H1 (cell line): ENCODE measurements at regions of chr11 and their contacts with region 1.

Region 1: DNA sequence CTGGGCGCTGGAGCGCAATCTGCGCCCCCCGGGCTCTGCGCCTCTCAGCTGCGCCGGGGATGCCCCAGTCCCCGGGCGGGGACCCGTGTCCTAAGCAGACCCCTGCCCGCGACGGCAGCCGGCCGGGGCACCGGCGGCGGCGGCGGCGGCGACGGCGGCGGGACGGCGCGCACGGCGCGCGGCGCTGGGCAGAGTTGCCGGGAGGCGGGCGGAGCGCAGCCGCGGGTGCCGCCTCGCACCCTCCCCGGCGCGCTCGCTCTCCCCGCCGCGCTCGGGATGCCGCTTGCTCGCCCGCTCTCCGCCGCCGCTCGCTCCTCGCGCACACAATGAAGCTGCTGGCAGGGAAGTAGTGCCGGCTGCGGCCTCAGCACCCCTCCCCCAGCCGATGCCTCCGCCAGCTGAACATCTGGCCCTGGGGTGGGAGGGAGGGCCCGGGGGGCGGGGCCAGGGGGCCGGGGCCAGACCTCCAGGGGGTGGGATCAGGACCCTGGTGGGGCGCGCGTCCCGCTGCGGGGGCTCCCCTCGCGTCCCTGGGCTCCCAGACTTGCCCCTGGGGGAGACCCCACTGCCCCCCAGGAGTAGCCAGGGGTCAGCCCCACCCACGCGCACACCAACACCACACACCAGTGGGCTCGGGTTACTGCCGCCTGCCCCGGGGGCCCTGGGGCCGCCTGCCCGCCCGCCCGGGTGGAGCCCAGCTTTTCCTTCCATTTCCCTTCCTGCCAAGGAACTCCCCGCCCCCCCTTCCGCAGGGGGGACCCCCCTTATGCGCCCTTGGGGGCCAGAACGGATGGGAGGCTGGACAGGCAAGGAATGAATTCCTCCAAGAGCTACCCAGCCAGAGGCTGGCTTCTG is at the start of gene RCOR2:
- DNase-seq: peak in 1 of 2 experiments; percentile 88
- H3K4me3 ChIP-seq: peak within 1 kb of the TSS; percentile 67 to 95 (median 89)
- H3K27ac ChIP-seq: peak within 1 kb of the TSS; percentile 95
- H3K4me1 ChIP-seq: peaks cover 2 to 37% (median 31%) of the 10 kb centered on the region in 4 experiments
- H3K27me3 ChIP-seq: no peaks in the 10 kb centered on the region
- CTCF ChIP-seq: no peak
- EP300 ChIP-seq: no peak; a peak in 1 of 3 replicates
- POLR2A ChIP-seq: peak in 1 of 2 experiments; percentile 41; a peak in 1 of 3 replicates
- RAD21 ChIP-seq: no peak
- total RNA-seq, gene RCOR2: 78.0 and 80.1 TPM in 2 replicates

Region 2: GRCh38 chr11:63768237-63769043 is 148.6 kb before region 1 on chr11 and contains the start of gene ZFTA:
- CTCF ChIA-PET with region 1: interaction called, 8 read pairs
- POLR2A ChIA-PET with region 1: interaction called, 73 read pairs
- DNase-seq: peak in 1 of 2 experiments; percentile 90
- H3K4me3 ChIP-seq: peak within 1 kb of the TSS; percentile 57 to 96 (median 82)
- H3K27ac ChIP-seq: peak within 1 kb of the TSS; percentile 83; the same call in 1 of the 2 replicates
- H3K4me1 ChIP-seq: peaks cover 5 to 33% (median 26%) of the 10 kb centered on the region in 4 experiments
- H3K27me3 ChIP-seq: peaks cover 0 to 16% (median 13%) of the 10 kb centered on the region in 4 experiments; a peak in 6 of 7 replicates
- CTCF ChIP-seq: peak in 2 of 3 experiments; percentile 55 to 73; a peak in 3 of 4 replicates
- EP300 ChIP-seq: no peak
- POLR2A ChIP-seq: peak in 1 of 2 experiments; percentile 23; a peak in 1 of 3 replicates
- RAD21 ChIP-seq: peak; percentile 55 to 78; a peak in 3 of 4 replicates
- total RNA-seq, gene ZFTA: 33.8 and 34.0 TPM in 2 replicates

Region 3: DNA sequence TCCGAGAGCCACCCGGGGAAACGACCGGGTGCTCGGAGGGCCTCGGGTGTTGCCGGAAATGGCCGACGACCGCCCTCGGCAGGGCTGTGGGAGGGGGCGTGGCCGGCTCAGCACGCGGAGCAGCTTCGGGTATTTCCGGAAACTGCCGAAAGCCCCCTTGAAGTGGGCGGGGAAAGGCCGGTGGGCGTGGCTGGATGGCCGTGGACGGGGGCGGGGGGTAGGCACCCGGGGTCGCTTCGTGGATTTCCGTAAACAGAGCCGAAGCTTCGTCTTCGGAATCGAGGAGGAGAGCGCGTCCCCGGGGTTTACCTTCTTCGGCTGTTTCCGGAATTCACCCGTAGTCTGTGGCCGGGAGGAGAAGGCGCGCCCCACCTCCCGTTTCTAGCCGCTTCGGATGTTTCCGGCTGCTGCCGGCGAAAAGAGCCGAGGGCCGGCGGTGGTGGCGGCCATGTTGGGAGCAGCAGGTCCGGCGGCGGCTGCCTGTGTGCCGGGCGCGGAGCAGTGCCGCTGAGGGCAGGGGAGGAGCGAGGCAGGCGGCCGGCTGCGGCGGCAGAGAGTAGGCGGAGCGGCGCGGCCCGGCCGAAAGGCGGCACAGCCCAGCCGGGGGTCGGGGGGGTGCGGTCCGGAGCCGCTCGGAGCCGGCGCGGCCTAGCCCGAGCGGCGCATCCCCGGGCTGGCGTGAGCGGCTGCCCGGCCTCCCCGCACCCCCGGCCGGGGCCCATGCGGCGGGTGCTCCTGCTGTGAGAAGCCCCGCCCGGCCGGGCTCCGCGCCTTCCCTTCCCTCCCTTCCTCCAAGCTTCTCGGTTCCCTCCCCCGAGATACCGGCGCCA is 78.2 kb before region 1 on chr11 and contains the start of gene MARK2:
- CTCF ChIA-PET with region 1: interaction called, 35 read pairs
- POLR2A ChIA-PET with region 1: interaction called, 45 read pairs
- DNase-seq: peak; percentile 97 to 100
- H3K4me3 ChIP-seq: peak within 1 kb of the TSS; percentile 83 to 97 (median 90)
- H3K27ac ChIP-seq: peak within 1 kb of the TSS; percentile 43
- H3K4me1 ChIP-seq: peaks cover 15 to 38% (median 25%) of the 10 kb centered on the region in 4 experiments
- H3K27me3 ChIP-seq: no peaks in the 10 kb centered on the region
- CTCF ChIP-seq: no peak
- EP300 ChIP-seq: no peak
- POLR2A ChIP-seq: peak in 1 of 2 experiments; percentile 48; a peak in 1 of 3 replicates
- RAD21 ChIP-seq: 0 out of 4 replicates have a peak, but pooled peaks of 1 of the 2 experiments have one; percentile 3
- total RNA-seq, gene MARK2: 56.5 and 58.5 TPM in 2 replicates

Region 4: DNA sequence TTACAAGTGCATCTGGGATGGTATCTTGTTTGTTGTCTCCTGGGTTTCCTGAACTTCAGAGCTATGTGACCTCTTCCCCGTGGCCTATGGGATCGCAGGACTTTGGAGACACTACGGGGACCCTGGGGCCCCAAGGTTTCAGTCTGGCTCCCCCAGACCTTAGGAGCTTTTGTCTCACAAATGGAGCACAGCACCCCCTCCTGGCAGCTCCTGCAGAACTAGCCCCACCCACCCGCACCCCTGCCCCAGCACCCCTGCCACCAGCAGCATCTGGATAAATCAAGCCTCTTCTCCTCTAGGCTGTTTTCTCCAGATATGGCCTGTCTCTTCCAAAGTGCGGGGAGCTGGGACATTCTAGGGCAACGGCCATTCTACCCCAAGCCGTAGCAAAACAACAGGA is 10.5 kb before region 1 on chr11:
- CTCF ChIA-PET with region 1: interaction called, 12 read pairs
- POLR2A ChIA-PET with region 1: interaction called, 74 read pairs
- DNase-seq: peak in 1 of 2 experiments; percentile 69
- H3K4me3 ChIP-seq: no peak overlapping the region
- H3K27ac ChIP-seq: no peak overlapping the region
- H3K4me1 ChIP-seq: peaks cover 6 to 51% (median 41%) of the 10 kb centered on the region in 4 experiments
- H3K27me3 ChIP-seq: no peaks in the 10 kb centered on the region
- CTCF ChIP-seq: peak in 2 of 3 experiments; percentile 18 to 22; a peak in 2 of 4 replicates
- EP300 ChIP-seq: no peak
- POLR2A ChIP-seq: no peak
- RAD21 ChIP-seq: peak; percentile 28 to 39; a peak in 3 of 4 replicates

Region 5: GRCh38 chr11:63938479-63939396 is 21.7 kb after region 1 on chr11 and contains the start of gene NAA40:
- CTCF ChIA-PET with region 1: interaction called, 129 read pairs
- POLR2A ChIA-PET with region 1: interaction called, 173 read pairs
- DNase-seq: peak; percentile 94 to 96
- H3K4me3 ChIP-seq: peak within 1 kb of the TSS; percentile 65 to 99 (median 76)
- H3K27ac ChIP-seq: peak within 1 kb of the TSS; percentile 97
- H3K4me1 ChIP-seq: no peaks in the 10 kb centered on the region; a peak in 1 of 7 replicates
- H3K27me3 ChIP-seq: no peaks in the 10 kb centered on the region
- CTCF ChIP-seq: peak in 1 of 3 experiments; percentile 0; a peak in 1 of 4 replicates
- EP300 ChIP-seq: peak in 1 of 2 experiments; percentile 45; a peak in 2 of 3 replicates
- POLR2A ChIP-seq: peak in 1 of 2 experiments; percentile 78; a peak in 2 of 3 replicates
- RAD21 ChIP-seq: no peak
- total RNA-seq, gene NAA40: 31.1 and 34.1 TPM in 2 replicates

Region 6: DNA sequence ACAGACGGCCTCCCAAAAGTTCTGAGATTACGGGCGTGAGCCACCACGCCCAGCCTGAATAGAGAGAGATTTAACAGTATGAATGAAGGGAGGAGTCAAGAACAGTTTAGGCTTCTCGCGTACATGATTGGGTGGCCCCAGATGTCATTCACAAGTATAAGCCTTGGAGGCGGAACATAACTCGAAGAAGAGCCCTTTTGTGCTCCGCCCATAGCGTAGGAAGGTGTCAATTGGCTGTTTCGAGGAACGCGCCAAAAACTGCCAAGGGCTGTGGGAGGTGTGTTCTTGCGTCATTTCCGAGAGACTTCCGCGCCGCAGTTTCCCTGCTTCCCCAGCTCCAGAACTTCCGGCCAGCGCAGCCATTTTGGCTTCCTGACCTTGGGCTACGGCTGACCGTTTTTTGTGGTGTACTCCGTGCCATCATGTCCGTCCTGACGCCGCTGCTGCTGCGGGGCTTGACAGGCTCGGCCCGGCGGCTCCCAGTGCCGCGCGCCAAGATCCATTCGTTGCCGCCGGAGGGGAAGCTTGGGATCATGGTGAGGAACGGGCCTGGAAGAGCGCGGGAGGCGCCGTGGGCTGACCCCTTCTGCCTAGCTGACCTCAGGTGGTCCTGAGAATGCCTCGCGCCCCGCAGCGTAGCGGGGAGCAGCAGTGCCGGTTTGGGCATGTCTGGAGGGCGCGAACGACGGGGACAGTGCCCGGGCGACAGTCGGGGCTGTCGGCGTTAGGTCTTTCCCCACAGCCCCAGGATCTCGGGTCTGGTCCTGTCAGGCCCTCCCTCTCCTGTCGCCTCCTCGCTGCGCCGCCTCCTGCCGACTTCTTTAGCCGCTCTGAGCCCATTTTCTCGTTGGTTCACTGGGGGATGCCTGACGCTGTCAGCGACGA is 57.4 kb after region 1 on chr11 and contains the start of gene COX8A:
- CTCF ChIA-PET with region 1: interaction called, 4 read pairs
- POLR2A ChIA-PET with region 1: interaction called, 16 read pairs
- DNase-seq: peak; percentile 91 to 98
- H3K4me3 ChIP-seq: peak within 1 kb of the TSS; percentile 90 to 99 (median 96)
- H3K27ac ChIP-seq: peak within 1 kb of the TSS; percentile 88
- H3K4me1 ChIP-seq: peaks cover 7 to 21% (median 14%) of the 10 kb centered on the region in 4 experiments
- H3K27me3 ChIP-seq: peaks cover 0 to 5% (median 2%) of the 10 kb centered on the region in 4 experiments; a peak in 3 of 7 replicates
- CTCF ChIP-seq: no peak
- EP300 ChIP-seq: peak in 1 of 2 experiments; percentile 68; a peak in 1 of 3 replicates
- POLR2A ChIP-seq: peak; percentile 56 to 84
- RAD21 ChIP-seq: no peak
- total RNA-seq, gene COX8A: 365 and 413 TPM in 2 replicates